ENCODE measurements at regions of chr2 and their contacts with region 1.

Region 1: DNA sequence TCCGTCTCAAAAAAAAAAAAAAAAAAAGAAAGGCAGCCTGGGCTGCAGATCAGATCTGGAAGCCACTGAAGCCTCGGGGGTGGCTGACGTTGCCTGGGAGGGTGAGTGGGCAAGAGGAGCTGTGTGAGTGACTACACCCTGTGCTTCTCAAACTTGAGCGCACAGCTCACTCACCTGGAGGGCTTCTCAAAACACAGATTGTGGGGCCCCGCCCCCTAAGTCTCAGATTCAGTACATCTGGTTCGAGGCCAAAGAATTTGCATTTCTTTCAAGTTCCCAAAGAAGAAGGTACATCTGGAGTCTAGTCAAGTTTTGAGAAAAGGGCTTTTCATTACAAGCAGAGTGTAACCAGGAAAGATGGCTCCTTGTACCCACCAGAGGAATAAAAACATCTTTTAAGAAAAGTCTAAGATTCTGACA is 97.7 kb upstream of the CAB39 start:
- DNase-seq: no peak
- ATAC-seq: no peak
- H3K4me3 ChIP-seq: no peak overlapping the region
- H3K27ac ChIP-seq: no peak overlapping the region
- H3K4me1 ChIP-seq: peaks cover 27 to 47% of the 10 kb centered on the region in 2 experiments
- H3K27me3 ChIP-seq: no peaks in the 10 kb centered on the region
- CTCF ChIP-seq: no peak
- POLR2A ChIP-seq: no peak
- RAD21 ChIP-seq: no peak

Region 2: DNA sequence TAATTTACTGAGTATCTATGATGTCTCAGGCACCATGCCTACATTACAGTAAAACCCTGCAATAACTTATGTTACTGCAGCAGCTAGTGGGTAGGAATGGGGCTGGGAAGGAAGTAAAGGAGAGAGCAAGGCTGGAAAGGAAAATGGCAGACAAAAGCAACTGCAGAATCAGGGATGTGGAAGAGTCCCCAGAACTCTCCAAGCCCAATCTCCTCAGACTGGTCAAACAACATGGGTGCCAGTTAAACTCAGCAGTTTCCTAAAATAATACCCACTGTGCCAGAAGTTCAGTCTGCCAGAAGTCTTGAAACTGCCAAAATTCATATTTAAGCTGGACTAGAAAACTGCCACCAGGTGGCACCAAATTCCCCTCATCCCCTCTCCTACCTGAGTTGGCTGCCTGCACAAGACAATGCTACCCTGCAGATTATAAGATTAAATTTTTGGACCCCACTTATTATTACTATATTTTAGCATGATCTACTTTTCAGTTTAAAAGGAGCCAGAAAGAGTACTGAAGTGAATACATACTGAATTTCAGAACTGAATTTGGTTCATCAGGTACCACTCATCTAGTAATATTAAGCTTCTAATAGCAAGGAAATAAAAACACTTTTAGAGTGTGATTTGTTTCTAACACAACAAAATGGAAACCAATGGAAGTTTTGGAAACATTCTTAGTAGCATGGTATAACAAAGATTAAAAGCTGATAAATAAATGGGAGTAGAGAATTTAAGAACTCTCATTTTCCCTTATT is 813.7 kb before region 1 on chr2:
- CTCF ChIA-PET with region 1: no interaction called
- POLR2A ChIA-PET with region 1: no interaction called
- RAD21 ChIA-PET with region 1: no interaction called
- intact Hi-C with region 1: loop called (anchors 1 kb)
- DNase-seq: peak; percentile 58
- ATAC-seq: peak; percentile 81
- H3K4me3 ChIP-seq: no peak overlapping the region
- H3K27ac ChIP-seq: peak overlapping the region; percentile 15; the same call in 1 of the 2 replicates
- H3K4me1 ChIP-seq: no peaks in the 10 kb centered on the region
- H3K27me3 ChIP-seq: no peaks in the 10 kb centered on the region
- CTCF ChIP-seq: peak; percentile 49 to 78 (median 70); a peak in 5 of 6 replicates
- POLR2A ChIP-seq: no peak
- RAD21 ChIP-seq: peak; percentile 78

Region 3: DNA sequence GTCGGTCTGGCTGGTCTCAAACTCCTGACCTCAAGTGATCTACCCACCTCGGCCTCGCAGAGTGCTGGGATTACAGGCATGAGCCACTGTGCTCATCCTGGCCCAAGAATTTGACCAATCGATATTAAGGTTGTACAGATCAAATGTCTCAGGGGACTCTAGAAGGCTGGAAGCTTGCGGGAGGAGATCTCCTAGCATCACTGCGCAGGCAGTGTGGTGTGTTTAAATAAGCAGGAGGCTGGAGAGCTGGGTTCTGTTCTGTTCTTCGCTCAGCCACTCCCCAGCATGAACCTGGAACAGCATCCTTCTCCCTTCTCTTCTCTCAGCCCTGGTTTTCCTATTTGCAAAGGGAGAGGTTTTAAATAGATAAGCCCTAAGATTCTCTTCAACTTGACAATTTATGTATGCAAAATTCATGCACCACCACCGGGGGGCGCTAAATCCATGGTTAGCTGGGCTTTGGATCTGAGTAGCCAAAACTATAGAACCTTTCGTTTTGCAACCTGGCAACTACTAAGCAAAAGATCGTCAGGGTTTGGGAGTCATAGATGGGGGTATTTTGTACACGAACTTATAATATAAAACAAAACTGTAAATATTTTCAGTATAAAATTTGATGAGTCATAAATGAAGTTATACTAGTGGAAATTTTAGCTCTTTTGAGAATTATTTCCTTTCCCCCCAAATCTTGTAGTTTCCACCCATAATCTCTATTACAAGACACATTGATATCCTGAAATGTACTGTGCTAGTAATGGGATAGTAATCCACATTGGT is 606.8 kb before region 1 on chr2:
- CTCF ChIA-PET with region 1: interaction called, 9 read pairs
- POLR2A ChIA-PET with region 1: no interaction called
- RAD21 ChIA-PET with region 1: no interaction called
- intact Hi-C with region 1: loop called (anchors 1 kb)
- DNase-seq: peak; percentile 46
- ATAC-seq: peak; percentile 80
- H3K4me3 ChIP-seq: no peak overlapping the region
- H3K27ac ChIP-seq: no peak overlapping the region
- H3K4me1 ChIP-seq: peaks cover 2 to 7% of the 10 kb centered on the region in 2 experiments; a peak in 2 of 4 replicates
- H3K27me3 ChIP-seq: no peaks in the 10 kb centered on the region
- CTCF ChIP-seq: peak; percentile 75 to 93 (median 88)
- POLR2A ChIP-seq: no peak
- RAD21 ChIP-seq: peak; percentile 92

Region 4: DNA sequence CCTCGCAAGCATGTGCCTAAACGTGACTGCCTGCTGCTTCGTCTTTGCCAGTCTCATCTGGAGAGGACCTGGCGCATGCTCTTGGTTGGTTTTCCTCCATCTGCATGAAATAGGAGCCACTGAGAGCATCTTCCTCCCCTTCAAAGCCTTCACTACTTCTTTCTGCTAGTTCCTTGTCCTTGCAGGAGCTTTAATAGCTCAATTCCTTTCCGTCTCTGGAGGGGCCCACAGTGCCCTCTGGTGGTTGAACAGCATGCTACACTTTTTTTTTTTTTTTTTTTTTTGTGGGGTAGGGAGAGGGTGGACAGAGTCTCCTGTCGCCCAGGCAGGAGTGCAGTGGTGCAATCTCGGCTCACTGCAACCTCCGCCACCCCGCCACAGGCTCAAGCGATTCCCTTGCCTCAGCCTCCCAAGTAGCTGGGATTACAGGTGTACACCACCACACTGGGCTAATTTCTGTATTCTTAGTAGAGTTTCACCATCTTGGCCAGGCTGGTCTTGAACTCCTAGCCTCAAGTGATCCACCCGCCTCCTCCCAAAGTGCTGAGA is 454.7 kb before region 1 on chr2:
- CTCF ChIA-PET with region 1: interaction called, 7 read pairs
- POLR2A ChIA-PET with region 1: no interaction called
- RAD21 ChIA-PET with region 1: no interaction called
- intact Hi-C with region 1: loop called (anchors 1 kb)
- DNase-seq: peak; percentile 26
- ATAC-seq: peak; percentile 80
- H3K4me3 ChIP-seq: no peak overlapping the region
- H3K27ac ChIP-seq: no peak overlapping the region
- H3K4me1 ChIP-seq: no peaks in the 10 kb centered on the region
- H3K27me3 ChIP-seq: no peaks in the 10 kb centered on the region
- CTCF ChIP-seq: peak; percentile 76 to 82 (median 82); a peak in 5 of 6 replicates
- POLR2A ChIP-seq: no peak
- RAD21 ChIP-seq: peak; percentile 83

Region 5: DNA sequence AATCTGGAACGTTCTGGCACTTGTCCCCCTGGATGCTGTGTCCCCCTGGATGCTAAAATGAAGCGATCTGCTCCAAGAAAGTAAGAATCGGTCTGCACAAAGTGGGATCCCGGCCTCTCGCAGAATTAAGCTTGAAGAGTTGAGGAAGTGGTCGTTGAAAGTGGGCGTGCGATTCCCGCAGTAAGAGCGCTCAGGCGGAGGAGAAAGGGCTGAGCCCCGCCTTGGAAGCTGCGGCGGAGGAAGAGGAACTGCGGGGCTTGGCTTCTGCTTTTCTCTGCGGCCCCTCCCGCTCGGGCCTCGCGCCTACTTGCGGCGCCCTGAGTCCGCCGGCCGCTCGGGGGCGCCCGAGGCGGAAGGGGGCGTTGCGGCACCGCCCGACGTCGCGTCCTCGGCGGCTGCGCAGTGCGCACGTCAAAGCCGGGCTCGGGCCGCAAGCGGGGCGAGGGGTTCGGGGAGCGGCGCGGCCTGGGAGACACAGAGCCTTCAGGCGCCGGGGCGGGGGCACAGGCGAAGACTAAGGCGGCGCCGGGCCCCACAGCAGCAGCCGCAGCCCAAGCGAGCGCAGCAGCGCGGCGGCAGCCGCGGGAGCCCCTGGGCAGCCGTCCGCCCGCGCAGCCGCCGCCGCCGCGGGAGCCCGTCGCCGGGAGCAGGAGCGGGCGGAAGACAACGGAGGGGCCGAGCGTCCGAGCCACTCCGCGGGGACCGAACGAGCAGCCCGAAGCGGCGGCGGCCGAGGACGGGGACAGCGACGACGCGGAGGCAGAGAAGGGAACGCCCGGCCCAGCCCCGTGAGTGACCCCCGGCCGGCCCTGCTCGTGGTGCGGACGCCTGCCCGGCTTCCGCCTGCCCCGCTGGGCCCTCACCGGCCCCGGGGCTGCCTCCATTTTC is 97.8 kb after region 1 on chr2 and contains the start of gene CAB39:
- CTCF ChIA-PET with region 1: no interaction called
- POLR2A ChIA-PET with region 1: no interaction called
- RAD21 ChIA-PET with region 1: no interaction called
- intact Hi-C with region 1: loop called (anchors 10 kb)
- DNase-seq: peak; percentile 69
- ATAC-seq: peak; percentile 92
- H3K4me3 ChIP-seq: peak within 1 kb of the TSS; percentile 68 to 85
- H3K27ac ChIP-seq: peak within 1 kb of the TSS; percentile 77
- H3K4me1 ChIP-seq: peaks cover 15 to 33% of the 10 kb centered on the region in 2 experiments; a peak in 3 of 4 replicates
- H3K27me3 ChIP-seq: no peaks in the 10 kb centered on the region
- CTCF ChIP-seq: peak; percentile 57 to 69 (median 65); a peak in 5 of 6 replicates
- POLR2A ChIP-seq: peak; percentile 50
- RAD21 ChIP-seq: peak; percentile 57
- total RNA-seq, gene CAB39: 63.6 TPM

Region 6: DNA sequence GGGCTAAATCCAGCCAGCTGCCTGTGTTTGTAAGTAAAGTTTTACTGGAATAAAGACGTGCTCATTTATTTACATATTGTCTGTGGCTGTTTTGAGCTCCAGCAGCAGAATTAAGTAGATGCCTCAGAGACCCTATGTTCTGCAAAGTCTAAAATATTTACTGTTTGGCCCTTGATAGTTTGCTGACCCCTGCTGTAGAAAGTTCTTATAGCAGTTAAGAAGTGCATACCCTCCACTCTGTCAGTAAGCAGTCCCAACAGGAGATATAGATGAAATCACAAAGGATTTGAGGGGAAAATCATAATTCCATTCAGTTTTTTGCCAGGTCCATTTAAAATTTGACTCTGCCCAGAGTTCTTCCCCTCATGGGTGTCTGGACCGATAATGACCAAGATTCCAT is 199.7 kb after region 1 on chr2:
- CTCF ChIA-PET with region 1: no interaction called
- POLR2A ChIA-PET with region 1: no interaction called
- RAD21 ChIA-PET with region 1: no interaction called
- intact Hi-C with region 1: loop called (anchors 5 kb)
- DNase-seq: no peak
- ATAC-seq: peak; percentile 76
- H3K4me3 ChIP-seq: no peak overlapping the region
- H3K27ac ChIP-seq: no peak overlapping the region
- H3K4me1 ChIP-seq: no peaks in the 10 kb centered on the region
- H3K27me3 ChIP-seq: no peaks in the 10 kb centered on the region
- CTCF ChIP-seq: peak; percentile 36 to 71 (median 56); a peak in 5 of 6 replicates
- POLR2A ChIP-seq: no peak
- RAD21 ChIP-seq: peak; percentile 72

Measured in HCT116 (cell line).